Activated CD8-positive, alpha-beta T cell treated with anti-CD3 and anti-CD28 coated beads, Interleukin-2, amount 10 ng/mL, durations not matched to agents 7 days and 5 days (primary cell): ENCODE measurements at regions of chr13 and their contacts with region 1.

Region 1: GRCh38 chr13:30132623-30133553 is 174.5 kb downstream of the KATNAL1 start:
- DNase-seq: peak; percentile 98
- ATAC-seq: peak; percentile 100
- H3K4me3 Mint-ChIP-seq: no peak overlapping the region
- H3K27ac Mint-ChIP-seq: peak overlapping the region; percentile 45
- H3K4me1 Mint-ChIP-seq: peaks cover 11% of the 10 kb centered on the region
- H3K27me3 Mint-ChIP-seq: peaks cover 3% of the 10 kb centered on the region

Region 2: DNA sequence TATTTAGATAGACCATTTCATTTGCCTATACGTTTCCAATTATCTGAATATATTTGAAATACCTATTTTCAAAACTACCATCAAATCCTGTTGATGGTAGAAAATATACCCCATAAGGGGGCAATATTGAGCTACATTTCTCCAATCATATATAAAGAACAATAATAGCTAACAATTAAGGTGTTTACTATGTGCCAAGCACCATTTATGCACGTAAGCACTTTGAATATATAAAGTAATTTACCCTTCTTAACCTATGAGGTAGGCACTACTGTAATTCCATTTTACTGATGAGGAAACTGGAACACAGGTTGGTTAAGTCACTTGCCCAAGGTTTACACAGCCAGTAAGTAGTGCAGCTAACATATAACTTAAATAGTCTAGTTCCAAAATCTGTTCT is 361.6 kb before region 1 on chr13:
- CTCF ChIA-PET with region 1: interaction called, 13 read pairs
- POLR2A ChIA-PET with region 1: no interaction called
- DNase-seq: no peak
- ATAC-seq: no peak
- H3K4me3 Mint-ChIP-seq: no peak overlapping the region
- H3K27ac Mint-ChIP-seq: no peak overlapping the region
- H3K4me1 Mint-ChIP-seq: no peaks in the 10 kb centered on the region
- H3K27me3 Mint-ChIP-seq: no peaks in the 10 kb centered on the region

Region 3: GRCh38 chr13:30148171-30148754 is 15.4 kb after region 1 on chr13:
- CTCF ChIA-PET with region 1: interaction called, 171 read pairs
- POLR2A ChIA-PET with region 1: interaction called, 10 read pairs
- DNase-seq: peak; percentile 66
- ATAC-seq: peak; percentile 74
- H3K4me3 Mint-ChIP-seq: peak overlapping the region; percentile 32
- H3K27ac Mint-ChIP-seq: peak overlapping the region; percentile 91
- H3K4me1 Mint-ChIP-seq: peaks cover 80% of the 10 kb centered on the region
- H3K27me3 Mint-ChIP-seq: no peaks in the 10 kb centered on the region

Region 4: GRCh38 chr13:30165796-30166195 is 32.9 kb after region 1 on chr13:
- CTCF ChIA-PET with region 1: interaction called, 13 read pairs
- POLR2A ChIA-PET with region 1: no interaction called
- DNase-seq: no peak
- ATAC-seq: no peak
- H3K4me3 Mint-ChIP-seq: no peak overlapping the region
- H3K27ac Mint-ChIP-seq: no peak overlapping the region
- H3K4me1 Mint-ChIP-seq: peaks cover 9% of the 10 kb centered on the region
- H3K27me3 Mint-ChIP-seq: peaks cover 9% of the 10 kb centered on the region

Region 5: DNA sequence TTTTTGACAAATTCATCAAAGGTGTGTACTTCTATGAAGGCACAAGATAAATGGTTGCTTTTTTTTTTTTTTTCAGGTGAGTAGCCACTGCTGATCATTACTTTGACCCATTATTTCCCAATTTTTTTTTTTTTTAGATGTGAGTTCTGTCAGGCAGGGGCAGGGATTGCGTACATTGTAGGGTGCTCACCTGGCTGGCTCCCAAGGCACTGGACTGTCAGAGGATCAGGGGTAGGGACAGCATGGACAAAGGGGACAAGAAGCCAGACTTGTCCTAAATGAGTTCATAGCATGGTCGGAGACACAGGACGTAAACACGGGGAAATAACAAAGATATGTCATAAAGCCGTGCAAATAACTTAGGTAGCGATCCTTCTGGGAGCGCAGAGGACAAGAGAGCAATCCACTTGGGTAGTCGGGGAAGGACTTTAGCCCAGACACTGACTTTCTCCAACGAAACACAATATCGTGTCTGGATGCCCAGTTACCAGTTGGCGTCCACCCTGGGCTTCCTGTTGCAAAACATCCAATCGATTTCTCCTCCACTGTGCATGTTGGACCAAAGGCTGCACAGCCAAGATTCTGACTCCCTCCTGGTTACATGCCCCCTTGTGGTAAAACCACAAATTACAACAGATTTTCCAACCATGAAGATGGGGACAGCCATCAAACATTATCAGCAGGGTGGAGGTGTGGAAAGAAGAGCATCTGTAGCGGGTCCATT is 201.9 kb after region 1 on chr13:
- CTCF ChIA-PET with region 1: interaction called, 25 read pairs
- POLR2A ChIA-PET with region 1: no interaction called
- DNase-seq: peak; percentile 50
- ATAC-seq: peak; percentile 68
- H3K4me3 Mint-ChIP-seq: no peak overlapping the region
- H3K27ac Mint-ChIP-seq: no peak overlapping the region
- H3K4me1 Mint-ChIP-seq: no peaks in the 10 kb centered on the region
- H3K27me3 Mint-ChIP-seq: peaks cover 12% of the 10 kb centered on the region

Region 6: DNA sequence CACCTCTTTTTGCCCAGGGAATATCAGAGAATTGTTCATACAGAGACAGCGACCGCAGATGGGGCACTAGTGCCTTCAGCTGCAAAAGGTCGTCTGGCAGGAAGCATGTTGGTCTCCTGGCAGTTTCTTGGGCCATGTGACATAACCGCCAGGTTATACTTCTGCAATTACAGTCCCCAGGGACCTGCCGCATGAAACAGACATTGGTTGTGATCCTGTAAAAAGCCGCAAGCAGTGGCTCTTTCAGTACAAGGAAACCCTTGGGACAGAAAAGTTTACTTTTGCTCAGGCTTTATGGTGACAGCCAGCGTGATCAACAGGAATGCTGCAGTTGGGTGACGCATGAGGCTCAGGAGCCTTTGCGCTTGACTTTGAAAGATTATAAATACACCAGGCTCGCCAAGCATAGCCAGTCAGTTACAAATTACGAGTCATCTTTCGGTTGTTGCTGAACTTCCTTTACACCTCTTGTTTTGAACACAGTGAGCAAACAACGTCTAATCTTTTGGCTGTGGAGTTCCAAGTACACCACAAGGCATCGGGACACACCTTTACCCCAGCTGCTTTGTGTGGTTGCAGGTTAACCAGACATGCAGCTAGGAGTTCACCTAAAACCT is 238.9 kb after region 1 on chr13:
- CTCF ChIA-PET with region 1: interaction called, 14 read pairs
- POLR2A ChIA-PET with region 1: no interaction called
- DNase-seq: peak; percentile 73
- ATAC-seq: peak; percentile 41
- H3K4me3 Mint-ChIP-seq: peak overlapping the region; percentile 57
- H3K27ac Mint-ChIP-seq: peak overlapping the region; percentile 87
- H3K4me1 Mint-ChIP-seq: peaks cover 78% of the 10 kb centered on the region
- H3K27me3 Mint-ChIP-seq: no peaks in the 10 kb centered on the region

Region 7: GRCh38 chr13:30551189-30551588 is 418.3 kb after region 1 on chr13:
- CTCF ChIA-PET with region 1: interaction called, 10 read pairs
- POLR2A ChIA-PET with region 1: no interaction called
- DNase-seq: peak; percentile 35
- ATAC-seq: peak; percentile 71
- H3K4me3 Mint-ChIP-seq: no peak overlapping the region
- H3K27ac Mint-ChIP-seq: no peak overlapping the region
- H3K4me1 Mint-ChIP-seq: no peaks in the 10 kb centered on the region
- H3K27me3 Mint-ChIP-seq: peaks cover 2% of the 10 kb centered on the region